AG04450 (cell line): ENCODE measurements at regions of chr22 and their contacts with region 1.

Region 1: GRCh38 chr22:30763815-30764686 is 69.4 kb downstream of the OSBP2 start:
- DNase-seq: peak; percentile 56
- H3K4me3 ChIP-seq: no peak overlapping the region
- H3K27ac ChIP-seq: no peak overlapping the region
- H3K27me3 ChIP-seq: peaks cover 2% of the 10 kb centered on the region
- CTCF ChIP-seq: peak; percentile 73

Region 2: GRCh38 chr22:30890686-30891442 is 126.8 kb after region 1 on chr22:
- CTCF ChIA-PET with region 1: interaction called, 30 read pairs
- POLR2A ChIA-PET with region 1: no interaction called
- DNase-seq: no peak
- H3K4me3 ChIP-seq: no peak overlapping the region
- H3K27ac ChIP-seq: no peak overlapping the region
- H3K27me3 ChIP-seq: no peaks in the 10 kb centered on the region
- CTCF ChIP-seq: peak; percentile 74